MCF 10A (cell line): ENCODE measurements at regions of chr2 and their contacts with region 1.

Region 1: DNA sequence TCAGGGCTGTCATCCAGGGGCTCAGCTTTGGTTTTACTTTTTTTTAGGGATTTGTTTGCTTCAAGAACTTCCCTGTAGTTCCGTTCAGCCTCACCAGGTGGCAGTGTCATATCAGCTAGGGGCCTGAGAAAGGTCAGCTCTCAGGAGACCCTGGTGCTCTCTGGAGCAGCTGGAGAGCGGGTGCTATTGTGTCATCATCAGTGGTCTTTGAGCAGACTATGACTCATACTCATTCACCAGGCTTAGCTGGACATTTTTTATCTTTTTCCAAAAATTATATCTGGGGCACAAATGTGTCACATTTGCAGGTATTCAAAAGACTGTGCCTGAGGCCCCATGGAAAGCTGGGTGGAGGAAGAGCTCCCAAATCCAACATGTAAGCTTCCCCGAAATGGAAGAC is 24.4 kb downstream of the ZNF892 start:
- DNase-seq: peak; percentile 89
- H3K4me3 Mint-ChIP-seq: no peak overlapping the region
- H3K27ac Mint-ChIP-seq: peak overlapping the region; percentile 54
- H3K4me1 Mint-ChIP-seq: peaks cover 18% of the 10 kb centered on the region
- H3K27me3 Mint-ChIP-seq: no peaks in the 10 kb centered on the region
- CTCF ChIP-seq: peak; percentile 95

Region 2: GRCh38 chr2:95215018-95215612 is 16.6 kb before region 1 on chr2:
- CTCF ChIA-PET with region 1: interaction called, 97 read pairs
- POLR2A ChIA-PET with region 1: interaction called, 3 read pairs
- intact Hi-C with region 1: no loop called
- DNase-seq: peak; percentile 4
- H3K4me3 Mint-ChIP-seq: no peak overlapping the region
- H3K27ac Mint-ChIP-seq: no peak overlapping the region
- H3K4me1 Mint-ChIP-seq: no peaks in the 10 kb centered on the region
- H3K27me3 Mint-ChIP-seq: no peaks in the 10 kb centered on the region
- CTCF ChIP-seq: no peak

Region 3: GRCh38 chr2:95267458-95268210 is 35.9 kb after region 1 on chr2:
- CTCF ChIA-PET with region 1: interaction called, 21 read pairs
- POLR2A ChIA-PET with region 1: no interaction called
- intact Hi-C with region 1: no loop called
- DNase-seq: peak; percentile 39
- H3K4me3 Mint-ChIP-seq: no peak overlapping the region
- H3K27ac Mint-ChIP-seq: no peak overlapping the region
- H3K4me1 Mint-ChIP-seq: peaks cover 6% of the 10 kb centered on the region
- H3K27me3 Mint-ChIP-seq: no peaks in the 10 kb centered on the region
- CTCF ChIP-seq: no peak

Region 4: GRCh38 chr2:95284886-95285541 is 53.3 kb after region 1 on chr2:
- CTCF ChIA-PET with region 1: interaction called, 10 read pairs
- POLR2A ChIA-PET with region 1: no interaction called
- intact Hi-C with region 1: no loop called
- DNase-seq: no peak
- H3K4me3 Mint-ChIP-seq: no peak overlapping the region
- H3K27ac Mint-ChIP-seq: no peak overlapping the region
- H3K4me1 Mint-ChIP-seq: no peaks in the 10 kb centered on the region
- H3K27me3 Mint-ChIP-seq: no peaks in the 10 kb centered on the region
- CTCF ChIP-seq: no peak

Region 5: GRCh38 chr2:95314964-95315611 is 83.4 kb after region 1 on chr2:
- CTCF ChIA-PET with region 1: interaction called, 323 read pairs
- POLR2A ChIA-PET with region 1: interaction called, 45 read pairs
- intact Hi-C with region 1: loop called (anchors 1 kb)
- DNase-seq: peak; percentile 80
- H3K4me3 Mint-ChIP-seq: peak overlapping the region; percentile 36
- H3K27ac Mint-ChIP-seq: peak overlapping the region; percentile 86
- H3K4me1 Mint-ChIP-seq: peaks cover 52% of the 10 kb centered on the region
- H3K27me3 Mint-ChIP-seq: no peaks in the 10 kb centered on the region
- CTCF ChIP-seq: peak; percentile 83

Region 6: DNA sequence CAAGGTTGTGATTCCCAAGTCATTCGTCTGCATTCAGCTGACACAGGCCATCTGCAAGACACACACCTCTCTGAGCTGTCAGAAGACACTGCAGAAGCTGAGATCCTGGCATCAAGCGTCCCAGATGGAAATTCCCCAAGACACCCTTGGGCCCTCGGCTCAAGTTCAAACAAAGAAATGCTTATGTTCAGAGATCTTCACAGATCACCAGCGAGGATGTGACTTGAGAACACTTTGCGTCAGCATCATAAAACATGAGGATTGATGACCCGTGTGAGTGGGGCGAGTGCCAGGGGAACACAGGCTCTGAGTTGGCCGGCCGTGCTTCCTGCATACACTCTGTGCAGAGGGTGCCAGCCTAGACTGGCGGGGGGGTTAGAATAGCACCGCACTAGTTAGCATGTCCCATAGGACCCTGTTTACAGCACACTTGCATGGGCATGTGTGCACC is 102.2 kb after region 1 on chr2:
- CTCF ChIA-PET with region 1: interaction called, 23 read pairs
- POLR2A ChIA-PET with region 1: no interaction called
- intact Hi-C with region 1: no loop called
- DNase-seq: peak; percentile 99
- H3K4me3 Mint-ChIP-seq: peak overlapping the region; percentile 52
- H3K27ac Mint-ChIP-seq: peak overlapping the region; percentile 94
- H3K4me1 Mint-ChIP-seq: peaks cover 44% of the 10 kb centered on the region
- H3K27me3 Mint-ChIP-seq: no peaks in the 10 kb centered on the region
- CTCF ChIP-seq: no peak

Region 7: DNA sequence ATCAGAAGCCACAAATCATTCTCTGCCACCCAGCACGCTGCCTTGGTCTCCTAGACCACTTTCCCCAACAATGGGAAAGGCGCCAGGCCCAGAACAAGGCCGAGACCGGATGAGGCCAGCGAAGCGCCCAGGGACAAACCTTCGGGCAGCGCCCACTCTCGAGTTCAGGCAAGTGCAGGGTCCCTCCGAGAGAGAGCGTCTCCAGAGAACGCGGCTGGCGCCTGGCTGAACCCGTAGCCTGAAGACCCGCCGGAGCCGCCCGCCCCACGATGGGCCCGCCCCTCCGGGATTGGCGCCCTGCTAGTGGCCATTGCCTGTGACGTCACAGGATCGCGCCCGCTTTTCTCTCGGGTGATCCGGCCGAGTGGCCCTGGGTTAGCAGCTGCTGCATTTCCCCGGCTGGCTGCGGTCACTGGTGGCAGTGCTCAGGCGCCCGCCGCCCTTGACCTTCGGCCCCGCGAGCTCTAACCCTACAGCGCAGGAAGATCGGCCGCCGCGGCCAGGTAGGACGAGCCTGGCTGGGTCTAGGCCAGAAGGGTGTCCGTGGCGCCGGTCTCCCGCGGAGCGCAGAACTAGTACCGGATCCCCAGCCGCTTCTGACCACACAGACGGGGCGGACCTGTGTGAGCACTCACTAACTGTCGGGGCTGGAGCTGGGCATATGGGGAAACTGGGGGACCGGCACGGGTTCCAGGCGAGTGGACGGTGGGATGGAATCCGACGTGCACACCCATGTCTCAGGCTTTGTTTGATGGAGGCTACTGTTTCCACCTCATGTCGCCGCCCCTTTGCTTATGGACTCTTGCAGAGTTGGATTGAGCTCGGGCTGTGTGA is 170.9 kb after region 1 on chr2 and contains the start of gene FAHD2A:
- CTCF ChIA-PET with region 1: interaction called, 29 read pairs
- POLR2A ChIA-PET with region 1: interaction called, 3 read pairs
- intact Hi-C with region 1: loop called (anchors 5 kb)
- DNase-seq: peak; percentile 91
- H3K4me3 Mint-ChIP-seq: peak within 1 kb of the TSS; percentile 99
- H3K27ac Mint-ChIP-seq: peak within 1 kb of the TSS; percentile 96
- H3K4me1 Mint-ChIP-seq: peaks cover 8% of the 10 kb centered on the region
- H3K27me3 Mint-ChIP-seq: no peaks in the 10 kb centered on the region
- CTCF ChIP-seq: no peak
- total RNA-seq, gene FAHD2A: 23.9 and 24.1 TPM in 2 replicates

Region 8: DNA sequence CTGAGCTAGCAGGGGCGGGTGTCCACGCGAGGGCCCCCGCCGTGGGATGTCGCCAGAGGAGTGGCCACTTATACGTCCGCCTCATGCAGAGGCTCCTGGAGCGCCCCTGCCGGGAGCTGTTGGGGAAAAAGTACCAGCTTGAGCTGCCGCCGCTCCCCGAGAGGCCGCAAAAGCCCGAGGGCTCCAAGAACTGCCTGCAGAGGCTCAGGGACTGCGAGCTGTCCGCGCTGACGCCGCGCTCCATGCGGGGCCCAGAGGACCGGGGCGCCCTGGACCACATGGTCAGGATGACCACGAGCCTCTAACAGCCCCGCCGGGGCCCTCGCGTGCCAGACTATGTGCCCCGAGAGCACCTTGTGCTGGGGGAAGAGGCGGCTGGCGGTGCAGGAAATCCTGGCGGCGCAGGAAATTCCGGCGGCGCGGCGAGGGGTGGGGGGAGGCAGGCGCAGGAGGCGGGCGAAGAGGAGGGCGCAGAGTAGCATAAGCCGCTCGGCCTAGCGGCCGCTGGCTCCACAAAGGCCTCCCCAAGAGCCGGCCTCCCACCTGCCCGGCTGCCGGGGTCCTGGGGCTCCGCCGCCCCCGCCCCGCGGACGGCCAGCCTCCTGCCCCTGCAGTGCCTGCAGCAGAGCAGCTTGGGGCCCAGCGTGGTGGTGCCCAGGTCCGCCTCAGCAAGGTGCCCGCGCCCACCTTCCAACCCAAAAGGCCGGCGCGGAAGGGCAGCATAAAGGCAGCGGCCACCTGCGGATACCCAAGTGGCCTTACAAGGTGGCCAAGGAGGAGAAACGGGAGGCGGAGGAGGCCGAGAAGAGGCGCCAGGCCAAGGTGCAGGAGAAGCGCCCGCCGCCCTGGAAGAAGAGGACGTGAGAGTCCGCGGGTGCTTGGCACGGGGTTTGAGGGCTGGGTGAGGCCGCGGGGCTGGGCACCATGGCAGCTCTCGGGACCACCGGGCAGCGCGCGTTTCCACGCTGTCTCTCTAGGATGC is 294.9 kb after region 1 on chr2:
- CTCF ChIA-PET with region 1: no interaction called
- POLR2A ChIA-PET with region 1: no interaction called
- intact Hi-C with region 1: no loop called
- DNase-seq: no peak
- H3K4me3 Mint-ChIP-seq: peak overlapping the region; percentile 71
- H3K27ac Mint-ChIP-seq: no peak overlapping the region
- H3K4me1 Mint-ChIP-seq: no peaks in the 10 kb centered on the region
- H3K27me3 Mint-ChIP-seq: peaks cover 10% of the 10 kb centered on the region
- CTCF ChIP-seq: no peak